Ovary (tissue), 10 donors: ENCODE measurements at regions of chr13 and their contacts with region 1.

Region 1: GRCh38 chr13:27857282-27857681 is 62.5 kb upstream of the PDX1 start:
- DNase-seq: no peak
- H3K4me3 ChIP-seq: no peak overlapping the region
- H3K27ac ChIP-seq: no peak overlapping the region
- H3K4me1 ChIP-seq: no peaks in the 10 kb centered on the region
- H3K27me3 ChIP-seq: no peaks in the 10 kb centered on the region
- CTCF ChIP-seq: no peak
- EP300 ChIP-seq: no peak
- POLR2A ChIP-seq: no peak

Region 2: GRCh38 chr13:27721681-27722080 is 135.6 kb before region 1 on chr13:
- intact Hi-C with region 1: no loop called
- DNase-seq: no peak
- H3K4me3 ChIP-seq: no peak overlapping the region
- H3K27ac ChIP-seq: no peak overlapping the region
- H3K4me1 ChIP-seq: no peaks in the 10 kb centered on the region
- H3K27me3 ChIP-seq: no peaks in the 10 kb centered on the region
- CTCF ChIP-seq: no peak
- EP300 ChIP-seq: no peak
- POLR2A ChIP-seq: no peak

Region 3: GRCh38 chr13:27868641-27869435 is 11.6 kb after region 1 on chr13:
- intact Hi-C with region 1: loop called in 1 of 4 experiments (anchors 1 kb)
- DNase-seq: no peak
- H3K4me3 ChIP-seq: no peak overlapping the region
- H3K27ac ChIP-seq: no peak overlapping the region
- H3K4me1 ChIP-seq: no peaks in the 10 kb centered on the region
- H3K27me3 ChIP-seq: no peaks in the 10 kb centered on the region
- CTCF ChIP-seq: no peak
- EP300 ChIP-seq: no peak
- POLR2A ChIP-seq: no peak

Region 4: GRCh38 chr13:27917121-27917947 is 60.1 kb after region 1 on chr13:
- intact Hi-C with region 1: no loop called
- DNase-seq: no peak
- H3K4me3 ChIP-seq: no peak overlapping the region
- H3K27ac ChIP-seq: no peak overlapping the region
- H3K4me1 ChIP-seq: peaks cover 1% of the 10 kb centered on the region
- H3K27me3 ChIP-seq: no peaks in the 10 kb centered on the region
- CTCF ChIP-seq: no peak
- EP300 ChIP-seq: no peak
- POLR2A ChIP-seq: no peak